ENCODE measurements at regions of chr16 and their contacts with region 1.

Region 1: GRCh38 chr16:57300387-57301125 is 16.1 kb upstream of the PLLP start:
- DNase-seq: peak; percentile 100
- H3K4me3 Mint-ChIP-seq: no peak overlapping the region
- H3K27ac Mint-ChIP-seq: no peak overlapping the region
- H3K4me1 Mint-ChIP-seq: peaks cover 8% of the 10 kb centered on the region
- H3K27me3 Mint-ChIP-seq: peaks cover 2% of the 10 kb centered on the region

Region 2: DNA sequence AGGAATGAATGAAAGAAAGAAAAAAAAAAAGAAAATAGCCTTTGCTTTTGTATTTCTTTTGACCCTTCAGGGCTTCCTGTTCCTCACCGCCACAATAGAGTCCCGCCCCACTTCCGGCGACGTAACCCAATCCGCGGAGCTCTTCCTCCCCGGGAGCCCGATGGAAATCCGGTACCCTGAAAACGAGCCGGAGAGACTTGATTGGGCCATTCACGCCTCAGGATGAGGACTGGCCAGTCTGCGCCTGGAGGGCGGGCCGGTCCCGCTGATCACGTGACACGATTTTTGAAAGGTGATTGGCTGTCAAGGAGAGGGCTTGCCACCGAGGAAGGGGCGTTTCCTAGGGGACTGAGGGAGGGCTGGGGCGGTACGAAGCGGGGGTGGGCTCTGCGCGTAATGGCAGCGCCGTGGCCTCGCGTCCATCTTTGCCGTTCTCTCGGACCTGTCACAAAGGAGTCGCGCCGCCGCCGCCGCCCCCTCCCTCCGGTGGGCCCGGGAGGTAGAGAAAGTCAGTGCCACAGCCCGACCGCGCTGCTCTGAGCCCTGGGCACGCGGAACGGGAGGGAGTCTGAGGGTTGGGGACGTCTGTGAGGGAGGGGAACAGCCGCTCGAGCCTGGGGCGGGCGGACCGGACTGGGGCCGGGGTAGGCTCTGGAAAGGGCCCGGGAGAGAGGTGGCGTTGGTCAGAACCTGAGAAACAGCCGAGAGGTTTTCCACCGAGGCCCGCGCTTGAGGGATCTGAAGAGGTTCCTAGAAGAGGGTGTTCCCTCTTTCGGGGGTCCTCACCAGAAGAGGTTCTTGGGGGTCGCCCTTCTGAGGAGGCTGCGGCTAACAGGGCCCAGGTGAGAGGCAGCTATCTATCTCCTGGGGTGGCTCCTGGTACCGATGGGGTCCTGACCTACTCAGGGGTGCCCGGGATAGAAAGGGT is 114.3 kb before region 1 on chr16 and contains the starts of genes PSME3IP1 and RSPRY1:
- CTCF ChIA-PET with region 1: interaction called, 4 read pairs
- intact Hi-C with region 1: loop called (anchors 1 kb)
- DNase-seq: peak; percentile 100
- H3K4me3 Mint-ChIP-seq: peak within 1 kb of the TSS; percentile 97
- H3K27ac Mint-ChIP-seq: peak within 1 kb of the TSS; percentile 95
- H3K4me1 Mint-ChIP-seq: peaks cover 52% of the 10 kb centered on the region
- H3K27me3 Mint-ChIP-seq: no peaks in the 10 kb centered on the region
- total RNA-seq, gene PSME3IP1: 106 to 110 TPM
- total RNA-seq, gene RSPRY1: 25.7 to 28.7 TPM

Region 3: GRCh38 chr16:57289391-57290257 is 10.9 kb before region 1 on chr16:
- CTCF ChIA-PET with region 1: no interaction called
- intact Hi-C with region 1: loop called (anchors 1 kb)
- DNase-seq: no peak
- H3K4me3 Mint-ChIP-seq: no peak overlapping the region
- H3K27ac Mint-ChIP-seq: peak overlapping the region; percentile 41
- H3K4me1 Mint-ChIP-seq: peaks cover 14% of the 10 kb centered on the region
- H3K27me3 Mint-ChIP-seq: no peaks in the 10 kb centered on the region

Region 4: GRCh38 chr16:57335366-57335765 is 34.8 kb after region 1 on chr16:
- CTCF ChIA-PET with region 1: no interaction called
- intact Hi-C with region 1: no loop called
- DNase-seq: no peak
- H3K4me3 Mint-ChIP-seq: no peak overlapping the region
- H3K27ac Mint-ChIP-seq: no peak overlapping the region
- H3K4me1 Mint-ChIP-seq: peaks cover 5% of the 10 kb centered on the region
- H3K27me3 Mint-ChIP-seq: no peaks in the 10 kb centered on the region

Region 5: DNA sequence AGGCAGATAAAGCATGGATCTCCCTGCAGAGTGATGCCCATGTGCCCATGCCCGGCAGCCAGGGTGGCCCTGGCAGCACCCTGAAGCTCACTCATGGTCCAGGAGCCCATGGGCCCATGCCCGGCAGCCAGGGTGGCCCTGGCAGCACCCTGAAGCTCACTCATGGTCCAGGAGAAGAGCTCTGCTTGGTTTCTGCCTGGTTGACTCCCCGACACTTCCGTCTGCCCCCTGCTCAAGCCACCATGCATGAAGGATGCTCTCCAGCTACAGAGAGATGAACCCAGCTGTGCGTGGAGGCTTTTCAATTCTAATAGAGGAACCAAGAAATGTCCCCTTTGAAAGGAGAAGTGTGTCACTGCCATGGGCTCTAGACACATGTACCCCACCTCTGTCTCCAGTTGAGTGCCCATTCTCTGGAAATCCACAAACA is 112.8 kb after region 1 on chr16:
- CTCF ChIA-PET with region 1: interaction called, 191 read pairs
- intact Hi-C with region 1: loop called (anchors 1 kb)
- DNase-seq: no peak
- H3K4me3 Mint-ChIP-seq: no peak overlapping the region
- H3K27ac Mint-ChIP-seq: no peak overlapping the region
- H3K4me1 Mint-ChIP-seq: peaks cover 9% of the 10 kb centered on the region
- H3K27me3 Mint-ChIP-seq: no peaks in the 10 kb centered on the region

Region 6: DNA sequence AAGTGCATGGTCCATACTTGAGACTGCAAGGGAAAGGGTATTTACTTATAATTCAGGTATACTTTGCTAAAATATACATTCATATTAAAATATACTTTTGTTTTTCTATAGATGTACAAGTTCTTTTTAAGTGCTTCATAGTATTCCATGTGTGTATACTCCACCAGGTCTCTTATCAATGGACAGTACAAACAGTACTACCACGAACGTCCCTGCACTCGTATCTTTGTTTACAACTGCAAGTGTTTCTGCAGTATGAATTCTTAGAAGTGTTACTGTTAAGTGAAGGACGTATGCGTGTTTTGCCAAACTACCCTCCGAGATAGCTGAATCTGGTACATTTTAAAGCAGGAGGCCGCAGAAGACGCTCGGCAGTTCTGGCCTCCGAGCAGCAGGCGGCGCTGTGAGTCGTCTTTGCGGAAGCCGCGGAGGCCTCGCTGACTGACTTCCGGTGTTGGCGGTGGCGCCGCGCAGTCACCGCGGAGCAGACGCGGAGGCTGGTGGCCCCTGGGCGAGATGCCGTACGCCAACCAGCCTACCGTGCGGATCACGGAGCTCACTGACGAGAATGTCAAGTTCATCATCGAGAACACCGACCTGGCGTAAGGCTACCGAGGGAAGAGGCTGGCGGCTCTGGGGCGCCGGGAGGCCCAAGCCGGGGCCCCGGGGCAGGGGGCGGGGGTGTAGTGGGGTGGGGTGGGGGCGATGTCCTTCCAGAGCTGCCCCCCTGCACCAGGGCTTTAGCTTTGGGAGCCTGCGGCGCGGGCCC is 161.8 kb after region 1 on chr16 and contains the start of gene POLR2C:
- CTCF ChIA-PET with region 1: interaction called, 8 read pairs
- intact Hi-C with region 1: loop called (anchors 1 kb)
- DNase-seq: peak; percentile 95
- H3K4me3 Mint-ChIP-seq: peak within 1 kb of the TSS; percentile 100
- H3K27ac Mint-ChIP-seq: peak within 1 kb of the TSS; percentile 99
- H3K4me1 Mint-ChIP-seq: peaks cover 30% of the 10 kb centered on the region
- H3K27me3 Mint-ChIP-seq: no peaks in the 10 kb centered on the region
- total RNA-seq, gene POLR2C: 49.4 to 53.0 TPM

Region 7: DNA sequence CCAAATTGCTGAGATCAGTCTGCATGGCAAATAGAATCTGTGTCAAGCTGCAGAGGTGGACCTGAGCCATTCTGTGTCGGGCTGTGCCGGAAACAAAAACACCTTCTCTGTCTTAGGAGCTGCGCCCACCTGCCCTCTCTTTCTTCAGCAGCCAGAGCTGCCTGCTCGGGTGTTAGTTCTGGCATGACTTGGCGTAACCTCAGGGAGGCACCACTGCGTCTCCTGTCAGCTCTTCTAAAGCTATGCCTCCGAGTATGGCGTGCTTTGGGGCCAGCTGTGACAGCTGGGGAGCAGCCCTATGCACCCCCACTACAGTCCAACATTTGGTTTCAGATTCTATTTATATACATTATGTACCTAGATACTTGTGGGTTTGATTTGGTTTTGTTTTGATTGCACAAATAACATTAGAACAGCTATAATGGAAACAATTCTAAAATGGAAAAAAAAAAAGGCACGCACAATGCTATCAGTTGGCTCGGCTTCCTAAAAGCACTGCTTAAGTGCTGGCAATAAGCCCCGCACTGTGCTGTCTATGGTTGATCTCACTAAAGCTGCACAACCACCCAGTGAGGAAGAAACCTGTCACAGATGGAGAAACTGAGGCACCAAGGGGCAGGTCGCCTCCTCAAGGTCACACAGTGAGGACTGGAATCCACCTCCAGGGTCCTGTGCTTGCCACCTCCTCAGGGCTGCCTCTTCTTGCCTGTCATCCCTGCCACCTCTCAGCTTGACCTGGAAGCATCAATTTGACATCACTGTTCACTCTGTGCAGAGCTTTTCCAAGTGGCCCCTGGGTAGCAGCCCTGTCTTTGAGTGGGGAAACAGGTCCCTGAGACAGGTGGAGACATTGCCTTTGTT is 309.2 kb after region 1 on chr16:
- CTCF ChIA-PET with region 1: no interaction called
- intact Hi-C with region 1: loop called (anchors 1 kb)
- DNase-seq: peak; percentile 92
- H3K4me3 Mint-ChIP-seq: peak overlapping the region; percentile 45
- H3K27ac Mint-ChIP-seq: peak overlapping the region; percentile 86
- H3K4me1 Mint-ChIP-seq: peaks cover 40% of the 10 kb centered on the region
- H3K27me3 Mint-ChIP-seq: no peaks in the 10 kb centered on the region

Region 8: GRCh38 chr16:58129097-58129936 is 828.8 kb after region 1 on chr16 and contains the start of gene CFAP20:
- CTCF ChIA-PET with region 1: no interaction called
- intact Hi-C with region 1: loop called (anchors 1 kb)
- DNase-seq: peak; percentile 98
- H3K4me3 Mint-ChIP-seq: peak within 1 kb of the TSS; percentile 96
- H3K27ac Mint-ChIP-seq: peak within 1 kb of the TSS; percentile 91
- H3K4me1 Mint-ChIP-seq: peaks cover 40% of the 10 kb centered on the region
- H3K27me3 Mint-ChIP-seq: no peaks in the 10 kb centered on the region
- total RNA-seq, gene CFAP20: 31.2 to 31.4 TPM

Measured in activated naive CD4-positive, alpha-beta T cell treated with anti-CD3 and anti-CD28 coated beads for 36 hours (primary cell).